Prostate gland (tissue), 2 donors: ENCODE measurements at regions of chr5 and their contacts with region 1.

Region 1: GRCh38 chr5:142108432-142109330 is at the start of gene NDFIP1:
- DNase-seq: peak; percentile 78
- H3K4me3 ChIP-seq: peak within 1 kb of the TSS; percentile 57 to 87
- H3K27ac ChIP-seq: peak within 1 kb of the TSS; percentile 98 to 99
- H3K4me1 ChIP-seq: no peaks in the 10 kb centered on the region
- H3K27me3 ChIP-seq: no peaks in the 10 kb centered on the region
- CTCF ChIP-seq: peak in 1 of 4 experiments; percentile 31
- POLR2A ChIP-seq: peak; percentile 90
- total RNA-seq, gene NDFIP1: 134 to 234 TPM

Region 2: DNA sequence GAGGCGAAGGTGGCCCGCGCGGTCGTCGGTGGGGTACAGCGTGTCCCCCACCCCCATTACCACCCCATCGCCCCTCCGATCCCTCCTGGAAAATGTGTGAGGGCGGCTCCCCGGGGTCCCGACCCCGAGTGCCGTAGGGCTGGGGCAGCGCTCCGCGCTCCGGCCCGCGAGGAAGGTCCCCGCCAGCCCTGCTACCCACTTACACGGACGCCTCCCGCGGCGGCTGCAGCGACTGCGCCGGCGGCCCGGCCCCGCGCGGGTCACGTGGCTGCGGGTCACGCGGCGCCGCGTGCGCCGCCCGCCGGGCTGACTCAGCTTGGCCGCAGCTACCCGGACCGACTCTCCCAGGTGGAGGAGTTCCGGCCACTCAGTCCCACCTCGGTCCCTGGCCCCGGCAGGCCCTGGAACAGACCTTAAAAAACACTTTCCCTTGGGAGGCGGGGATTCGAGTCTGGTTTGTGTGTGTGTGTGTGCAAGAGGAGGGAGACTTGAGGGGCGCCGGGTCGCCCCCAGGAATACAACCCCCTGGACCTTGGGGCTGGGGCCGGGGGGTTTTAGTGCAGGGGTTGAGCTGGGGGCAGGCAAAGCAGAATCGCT is 95.8 kb before region 1 on chr5 and contains the start of gene GNPDA1:
- intact Hi-C with region 1: loop called (anchors 5 kb)
- DNase-seq: peak; percentile 78
- H3K4me3 ChIP-seq: peak within 1 kb of the TSS; percentile 73 to 81
- H3K27ac ChIP-seq: peak within 1 kb of the TSS; percentile 87
- H3K4me1 ChIP-seq: peaks cover 8% of the 10 kb centered on the region
- H3K27me3 ChIP-seq: no peaks in the 10 kb centered on the region
- CTCF ChIP-seq: peak in 2 of 4 experiments; percentile 16 to 53
- POLR2A ChIP-seq: peak; percentile 57
- total RNA-seq, gene GNPDA1: 30.0 to 58.5 TPM

Region 3: DNA sequence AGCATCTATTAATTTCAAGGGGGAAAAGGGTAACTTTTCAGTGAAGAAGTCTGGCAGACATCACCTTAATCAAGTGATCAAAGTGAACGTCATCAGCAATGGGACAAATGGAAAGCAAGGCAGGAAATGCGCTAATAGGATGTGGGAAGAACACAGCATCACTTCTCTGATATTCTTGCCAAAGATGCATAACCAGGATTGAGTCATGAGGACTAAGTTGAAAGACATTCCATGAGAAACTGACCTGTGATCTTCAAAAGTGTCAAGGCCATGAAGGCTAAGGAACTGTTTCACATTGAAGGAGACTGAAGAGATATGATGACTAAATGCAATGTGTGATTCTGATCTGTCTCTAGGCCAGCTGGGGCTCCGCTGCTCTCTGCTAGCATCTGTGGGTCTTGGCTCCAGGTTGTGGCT is 92.8 kb after region 1 on chr5:
- intact Hi-C with region 1: no loop called
- DNase-seq: no peak
- H3K4me3 ChIP-seq: no peak overlapping the region
- H3K27ac ChIP-seq: no peak overlapping the region
- H3K4me1 ChIP-seq: no peaks in the 10 kb centered on the region
- H3K27me3 ChIP-seq: no peaks in the 10 kb centered on the region
- CTCF ChIP-seq: no peak
- POLR2A ChIP-seq: no peak